Uterus (tissue), 4 donors: ENCODE measurements at regions of chr6 and their contacts with region 1.

Region 1: GRCh38 chr6:2749969-2750600 is 637 bp downstream of the MYLK4 start:
- DNase-seq: peak; percentile 50 to 56
- H3K4me3 ChIP-seq: peak overlapping the region; percentile 6
- H3K27ac ChIP-seq: no peak overlapping the region
- H3K4me1 ChIP-seq: no peaks in the 10 kb centered on the region
- H3K27me3 ChIP-seq: no peaks in the 10 kb centered on the region
- CTCF ChIP-seq: peak; percentile 63 to 84 (median 71)
- POLR2A ChIP-seq: no peak

Region 2: GRCh38 chr6:1596088-1596852 is 1153.8 kb before region 1 on chr6:
- intact Hi-C with region 1: loop called (anchors 10 kb)
- DNase-seq: peak in 1 of 2 donors; percentile 57
- H3K4me3 ChIP-seq: no peak overlapping the region
- H3K27ac ChIP-seq: no peak overlapping the region
- H3K4me1 ChIP-seq: no peaks in the 10 kb centered on the region
- H3K27me3 ChIP-seq: peaks cover 0 to 8% of the 10 kb centered on the region in 2 donors
- CTCF ChIP-seq: peak; percentile 89 to 91 (median 90)
- POLR2A ChIP-seq: no peak

Region 3: DNA sequence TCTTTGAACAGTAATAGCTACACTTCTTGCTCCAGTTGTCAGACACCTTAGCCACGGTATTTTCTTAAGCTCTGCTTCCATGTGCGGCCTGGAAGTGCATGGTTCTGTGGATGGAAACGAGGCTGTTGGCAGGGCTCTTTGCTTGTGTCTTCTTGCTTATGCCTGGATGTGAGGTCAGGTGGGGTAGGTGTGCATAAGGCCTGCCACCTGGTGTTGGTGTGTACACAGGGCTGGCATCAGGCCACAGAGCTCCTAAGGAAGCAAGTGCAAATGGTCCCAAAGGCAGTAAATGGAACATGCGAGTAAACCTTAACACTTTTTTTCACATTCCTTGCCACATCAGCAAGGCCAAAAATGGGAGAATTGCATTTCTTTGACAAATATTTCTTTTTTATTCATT is 346.5 kb before region 1 on chr6:
- intact Hi-C with region 1: no loop called
- DNase-seq: no peak
- H3K4me3 ChIP-seq: no peak overlapping the region
- H3K27ac ChIP-seq: no peak overlapping the region
- H3K4me1 ChIP-seq: no peaks in the 10 kb centered on the region
- H3K27me3 ChIP-seq: no peaks in the 10 kb centered on the region
- CTCF ChIP-seq: no peak
- POLR2A ChIP-seq: no peak

Region 4: GRCh38 chr6:2563635-2564034 is 186.4 kb before region 1 on chr6:
- intact Hi-C with region 1: no loop called
- DNase-seq: no peak
- H3K4me3 ChIP-seq: no peak overlapping the region
- H3K27ac ChIP-seq: no peak overlapping the region
- H3K4me1 ChIP-seq: no peaks in the 10 kb centered on the region
- H3K27me3 ChIP-seq: no peaks in the 10 kb centered on the region
- CTCF ChIP-seq: no peak
- POLR2A ChIP-seq: no peak